Activated B cell treated with CpG ODN at 0.5 μM for 24 hours (primary cell): ENCODE measurements at regions of chr1 and their contacts with region 1.

Region 1: DNA sequence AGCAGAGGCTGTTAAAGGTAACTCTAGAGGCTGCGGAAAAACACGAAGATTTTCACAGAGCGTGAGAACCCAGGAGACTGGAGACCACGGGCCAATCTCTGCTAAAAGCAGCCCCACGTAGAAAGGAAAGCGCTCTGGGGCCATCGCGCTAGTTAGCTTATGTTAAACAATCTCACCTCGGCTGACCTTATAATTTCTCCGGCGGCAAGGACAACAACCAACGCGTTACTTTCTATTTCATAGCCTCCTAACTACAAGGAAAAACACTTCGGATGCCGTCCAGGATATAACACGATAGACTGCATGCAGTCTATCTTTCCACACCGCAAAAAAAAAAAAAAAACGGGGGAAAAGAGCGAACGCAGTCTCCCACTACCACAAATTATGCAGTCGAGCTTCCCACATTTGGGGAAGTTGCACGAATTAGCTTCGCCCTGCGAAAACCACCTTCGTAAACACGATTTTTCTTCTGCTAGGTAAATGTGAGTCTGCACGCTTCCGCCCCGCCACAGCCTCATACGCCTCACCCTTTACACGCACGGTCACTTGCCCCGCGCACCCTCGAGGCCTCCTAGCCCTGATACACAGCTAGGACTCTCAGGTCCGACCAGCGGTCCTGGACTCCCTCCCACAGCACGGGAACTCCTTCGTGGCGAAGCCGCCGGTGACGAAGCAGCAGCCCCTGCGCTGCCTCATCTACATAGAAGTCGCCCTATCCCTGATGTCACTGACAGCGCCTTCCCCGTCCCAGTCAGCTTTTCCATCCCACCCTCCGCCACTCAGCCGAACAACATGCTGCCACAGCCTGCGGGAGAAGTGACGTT is 87.8 kb downstream of the PRKAB2 start:
- DNase-seq: peak; percentile 72
- ATAC-seq: peak; percentile 80
- H3K4me3 Mint-ChIP-seq: peak overlapping the region; percentile 93
- H3K27ac Mint-ChIP-seq: peak overlapping the region; percentile 100
- H3K4me1 Mint-ChIP-seq: peaks cover 30% of the 10 kb centered on the region
- H3K27me3 Mint-ChIP-seq: peaks cover 36% of the 10 kb centered on the region
- CTCF ChIP-seq: no peak

Region 2: DNA sequence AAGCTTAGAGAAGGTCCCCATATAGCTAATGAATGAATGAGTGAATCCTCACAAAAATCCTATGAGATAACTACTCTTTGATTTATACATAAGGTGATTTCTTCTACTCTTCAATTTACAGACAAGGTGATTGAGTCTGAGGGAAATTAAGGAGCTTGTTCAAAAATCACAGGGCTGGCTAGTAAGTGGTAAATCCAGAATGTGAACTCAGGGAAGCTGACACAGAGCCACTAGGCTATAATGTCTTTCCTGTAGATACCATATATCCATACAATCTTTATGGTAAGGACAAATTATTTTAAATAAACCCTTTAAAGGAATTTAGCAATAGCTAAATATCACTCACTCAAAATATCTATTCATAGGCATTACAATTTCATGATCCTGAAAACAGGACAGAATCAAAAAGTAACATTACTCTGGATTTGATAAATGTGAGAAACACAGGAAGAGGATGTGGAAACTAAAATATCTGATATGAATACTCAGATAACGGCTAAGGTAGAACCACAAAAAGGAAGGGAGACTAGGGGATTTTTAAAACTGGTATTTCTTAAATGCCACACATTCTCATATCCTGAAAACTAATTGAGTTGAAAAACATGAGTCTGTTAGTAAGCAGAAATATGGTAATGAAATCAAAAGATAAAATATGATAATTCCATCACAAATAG is 38.2 kb before region 1 on chr1:
- CTCF ChIA-PET with region 1: interaction called, 11 read pairs
- POLR2A ChIA-PET with region 1: interaction called, 99 read pairs
- intact Hi-C with region 1: loop called (anchors 2 kb)
- DNase-seq: no peak
- ATAC-seq: peak; percentile 75
- H3K4me3 Mint-ChIP-seq: peak overlapping the region; percentile 73
- H3K27ac Mint-ChIP-seq: peak overlapping the region; percentile 93
- H3K4me1 Mint-ChIP-seq: peaks cover 71% of the 10 kb centered on the region
- H3K27me3 Mint-ChIP-seq: no peaks in the 10 kb centered on the region
- CTCF ChIP-seq: no peak

Region 3: GRCh38 chr1:147052677-147053076 is 31.8 kb before region 1 on chr1:
- CTCF ChIA-PET with region 1: no interaction called
- POLR2A ChIA-PET with region 1: interaction called, 15 read pairs
- intact Hi-C with region 1: loop called (anchors 2 kb)
- DNase-seq: no peak
- ATAC-seq: no peak
- H3K4me3 Mint-ChIP-seq: no peak overlapping the region
- H3K27ac Mint-ChIP-seq: no peak overlapping the region
- H3K4me1 Mint-ChIP-seq: peaks cover 44% of the 10 kb centered on the region
- H3K27me3 Mint-ChIP-seq: no peaks in the 10 kb centered on the region
- CTCF ChIP-seq: no peak

Region 4: GRCh38 chr1:147072370-147073061 is 12.0 kb before region 1 on chr1:
- CTCF ChIA-PET with region 1: interaction called, 3 read pairs
- POLR2A ChIA-PET with region 1: interaction called, 23 read pairs
- intact Hi-C with region 1: no loop called
- DNase-seq: no peak
- ATAC-seq: peak; percentile 79
- H3K4me3 Mint-ChIP-seq: peak overlapping the region; percentile 87
- H3K27ac Mint-ChIP-seq: peak overlapping the region; percentile 72
- H3K4me1 Mint-ChIP-seq: peaks cover 16% of the 10 kb centered on the region
- H3K27me3 Mint-ChIP-seq: peaks cover 43% of the 10 kb centered on the region
- CTCF ChIP-seq: no peak

Region 5: DNA sequence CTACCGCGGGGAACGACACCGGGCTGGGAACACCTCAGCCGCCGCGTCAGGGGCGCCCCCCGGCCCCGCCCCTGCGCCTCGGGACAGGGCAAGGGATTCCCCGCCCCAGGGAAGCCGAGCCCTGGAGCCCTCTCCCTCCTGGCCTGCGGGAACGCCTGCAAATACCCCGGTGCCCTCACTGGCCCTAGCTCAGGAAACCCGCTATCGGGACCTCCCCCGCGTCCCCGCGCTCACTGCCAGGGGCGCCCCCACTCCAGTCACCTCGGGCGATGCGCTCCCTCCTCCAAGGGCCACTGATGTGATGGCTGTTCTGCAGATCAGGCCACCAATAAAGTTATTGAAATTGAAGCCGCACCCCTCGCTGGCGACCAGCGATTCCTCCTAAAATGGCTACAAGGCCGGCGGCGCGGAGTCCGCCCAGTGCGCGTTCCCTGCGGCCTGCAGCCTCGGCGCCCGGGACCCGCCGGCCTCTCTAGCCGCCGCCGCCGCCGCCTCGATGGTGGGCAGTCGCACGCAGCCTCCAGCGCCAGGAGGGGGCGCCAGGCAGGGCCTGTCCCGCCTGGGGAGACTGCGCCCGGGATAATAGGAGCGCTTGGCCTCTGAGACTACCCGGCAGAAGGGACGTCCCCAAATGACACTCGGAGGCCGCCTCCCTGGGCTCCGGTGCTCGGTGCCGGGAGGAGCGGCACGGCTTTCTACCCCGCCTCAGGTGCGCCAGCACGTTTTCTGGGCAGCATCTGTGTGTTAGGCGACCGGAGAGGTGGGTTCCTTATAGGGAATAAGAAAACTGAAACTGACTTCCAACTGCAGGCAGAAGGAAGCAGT is 87.9 kb after region 1 on chr1 and contains the start of gene PRKAB2:
- CTCF ChIA-PET with region 1: no interaction called
- POLR2A ChIA-PET with region 1: interaction called, 33 read pairs
- intact Hi-C with region 1: loop called (anchors 10 kb)
- DNase-seq: peak; percentile 96
- ATAC-seq: peak; percentile 88
- H3K4me3 Mint-ChIP-seq: peak within 1 kb of the TSS; percentile 99
- H3K27ac Mint-ChIP-seq: peak within 1 kb of the TSS; percentile 98
- H3K4me1 Mint-ChIP-seq: peaks cover 32% of the 10 kb centered on the region
- H3K27me3 Mint-ChIP-seq: no peaks in the 10 kb centered on the region
- CTCF ChIP-seq: peak; percentile 83
- total RNA-seq, gene PRKAB2: 9.8 and 10.5 TPM in 2 replicates

Region 6: DNA sequence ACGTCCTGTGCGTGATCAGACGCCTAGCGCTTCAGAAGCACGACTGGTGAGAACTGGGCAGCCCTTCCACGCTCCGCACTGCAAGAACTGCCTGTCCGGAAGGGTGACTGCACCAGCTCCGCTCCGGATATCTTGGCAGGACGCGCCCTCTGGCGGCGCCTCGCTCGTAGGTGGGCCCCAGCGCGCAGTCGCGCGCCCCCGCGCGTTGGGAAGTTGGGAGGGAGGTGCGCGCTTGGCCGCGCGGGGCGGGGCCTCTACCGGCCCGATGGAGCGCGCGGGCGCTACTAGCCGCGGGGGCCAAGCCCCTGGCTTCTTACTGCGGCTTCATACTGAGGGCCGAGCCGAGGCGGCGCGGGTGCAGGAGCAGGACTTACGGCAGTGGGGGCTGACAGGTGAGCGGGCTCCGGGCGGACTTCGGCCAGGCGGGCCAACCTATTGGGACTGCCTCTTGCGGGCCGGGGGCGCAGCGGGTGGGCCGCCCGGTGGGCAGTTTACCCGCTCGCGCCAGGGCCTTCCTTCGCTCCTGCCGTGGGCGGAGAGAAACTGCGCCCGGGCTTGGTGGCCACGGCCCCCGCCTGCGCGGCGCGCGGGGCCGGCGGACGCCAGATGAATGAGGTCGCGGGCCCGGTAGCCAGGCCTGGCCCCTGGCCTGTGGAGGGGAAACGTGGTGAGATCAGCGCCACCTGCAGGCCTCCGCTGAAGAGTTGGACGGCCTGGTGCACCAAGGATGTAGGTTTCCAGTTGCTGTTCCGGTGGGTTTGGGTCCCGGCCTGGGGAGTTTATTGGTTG is 158.1 kb after region 1 on chr1 and contains the start of gene CHD1L:
- CTCF ChIA-PET with region 1: interaction called, 4 read pairs
- POLR2A ChIA-PET with region 1: interaction called, 27 read pairs
- intact Hi-C with region 1: loop called (anchors 2 kb)
- DNase-seq: peak; percentile 94
- ATAC-seq: peak; percentile 88
- H3K4me3 Mint-ChIP-seq: peak within 1 kb of the TSS; percentile 93
- H3K27ac Mint-ChIP-seq: peak within 1 kb of the TSS; percentile 87
- H3K4me1 Mint-ChIP-seq: peaks cover 38% of the 10 kb centered on the region
- H3K27me3 Mint-ChIP-seq: no peaks in the 10 kb centered on the region
- CTCF ChIP-seq: peak; percentile 32
- total RNA-seq, gene CHD1L: 47.3 and 55.7 TPM in 2 replicates

Region 7: GRCh38 chr1:148263128-148263905 is 1178.8 kb after region 1 on chr1:
- CTCF ChIA-PET with region 1: no interaction called
- POLR2A ChIA-PET with region 1: interaction called, 10 read pairs
- intact Hi-C with region 1: no loop called
- DNase-seq: peak; percentile 58
- ATAC-seq: peak; percentile 89
- H3K4me3 Mint-ChIP-seq: peak overlapping the region; percentile 93
- H3K27ac Mint-ChIP-seq: peak overlapping the region; percentile 98
- H3K4me1 Mint-ChIP-seq: peaks cover 14% of the 10 kb centered on the region
- H3K27me3 Mint-ChIP-seq: no peaks in the 10 kb centered on the region
- CTCF ChIP-seq: no peak

Region 8: GRCh38 chr1:148362626-148363438 is 1278.3 kb after region 1 on chr1:
- CTCF ChIA-PET with region 1: no interaction called
- POLR2A ChIA-PET with region 1: no interaction called
- intact Hi-C with region 1: no loop called
- DNase-seq: no peak
- ATAC-seq: peak; percentile 25
- H3K4me3 Mint-ChIP-seq: peak overlapping the region; percentile 81
- H3K27ac Mint-ChIP-seq: no peak overlapping the region
- H3K4me1 Mint-ChIP-seq: peaks cover 19% of the 10 kb centered on the region
- H3K27me3 Mint-ChIP-seq: peaks cover 29% of the 10 kb centered on the region
- CTCF ChIP-seq: no peak